ENCODE measurements at regions of chr19 and their contacts with region 1.

Region 1: DNA sequence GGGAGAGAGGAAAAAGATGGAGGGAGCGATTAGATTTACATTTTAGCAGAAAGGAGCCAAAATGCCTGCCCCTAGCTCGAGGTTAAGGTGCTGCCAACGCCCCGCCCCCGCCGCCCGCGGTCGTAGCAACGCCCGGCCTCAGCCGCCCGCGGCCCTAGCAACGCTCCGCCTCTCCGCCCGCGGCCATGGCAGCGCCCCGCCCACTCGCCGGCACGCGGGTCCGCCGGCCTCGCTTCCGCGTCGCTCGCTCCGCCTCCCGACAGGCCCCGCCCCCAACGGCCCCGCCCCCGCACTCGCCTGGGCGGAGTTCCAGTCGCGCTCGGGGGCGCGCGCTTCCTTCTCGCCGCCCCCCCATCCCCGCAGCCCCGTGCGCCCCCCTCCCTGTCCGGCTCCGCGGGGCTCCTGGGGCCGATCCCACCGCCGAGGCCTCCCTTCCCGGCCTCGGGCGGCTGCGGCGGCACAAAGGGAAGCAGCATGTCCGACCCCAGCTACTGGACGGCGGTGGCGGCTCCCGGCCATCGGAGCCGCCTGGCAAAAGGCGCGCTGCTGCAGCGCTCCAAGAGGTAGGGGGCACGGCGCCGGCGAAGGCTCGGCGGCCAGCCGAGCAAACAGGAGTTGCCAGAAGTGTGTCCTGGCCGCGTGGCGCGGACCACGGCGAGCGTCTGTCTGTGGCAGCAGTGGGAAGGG is 20.3 kb downstream of the MAST3 start:
- DNase-seq: peak; percentile 94 to 97 (median 96)
- ATAC-seq: peak; percentile 96
- H3K4me3 ChIP-seq: peak overlapping the region; percentile 44
- H3K4me1 ChIP-seq: peaks cover 13% of the 10 kb centered on the region
- CTCF ChIP-seq: no peak

Region 2: DNA sequence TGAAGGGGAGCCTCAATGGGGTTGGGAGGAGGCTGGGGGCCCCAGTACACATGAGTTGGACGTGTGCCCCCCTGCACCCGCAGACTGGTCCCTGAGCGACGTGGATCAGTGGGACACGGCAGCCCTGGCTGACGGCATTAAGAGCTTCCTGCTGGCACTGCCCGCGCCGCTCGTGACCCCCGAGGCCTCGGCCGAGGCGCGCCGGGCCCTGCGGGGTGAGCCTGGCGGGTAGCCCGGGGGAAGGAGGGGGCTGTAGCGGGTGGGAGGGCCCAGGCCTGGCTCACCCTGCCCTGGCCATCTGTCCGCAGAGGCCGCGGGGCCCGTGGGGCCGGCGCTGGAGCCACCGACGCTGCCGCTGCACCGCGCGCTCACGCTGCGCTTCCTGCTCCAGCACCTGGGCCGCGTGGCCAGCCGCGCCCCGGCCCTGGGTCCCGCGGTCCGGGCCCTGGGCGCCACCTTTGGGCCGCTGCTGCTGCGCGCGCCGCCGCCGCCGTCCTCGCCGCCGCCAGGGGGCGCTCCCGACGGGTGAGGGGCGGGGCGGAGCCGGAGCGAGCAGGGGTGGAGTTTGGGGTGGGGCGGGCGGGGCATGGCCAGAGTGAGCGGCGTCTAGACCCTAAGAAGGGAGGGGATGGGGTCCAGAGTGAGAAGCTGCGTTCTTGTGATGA is 43.3 kb after region 1 on chr19:
- intact Hi-C with region 1: loop called (anchors 5 to 10 kb)
- DNase-seq: peak; percentile 77 to 90 (median 80)
- ATAC-seq: peak; percentile 91
- H3K4me3 ChIP-seq: no peak overlapping the region
- H3K4me1 ChIP-seq: peaks cover 23% of the 10 kb centered on the region
- CTCF ChIP-seq: peak; percentile 92

Region 3: DNA sequence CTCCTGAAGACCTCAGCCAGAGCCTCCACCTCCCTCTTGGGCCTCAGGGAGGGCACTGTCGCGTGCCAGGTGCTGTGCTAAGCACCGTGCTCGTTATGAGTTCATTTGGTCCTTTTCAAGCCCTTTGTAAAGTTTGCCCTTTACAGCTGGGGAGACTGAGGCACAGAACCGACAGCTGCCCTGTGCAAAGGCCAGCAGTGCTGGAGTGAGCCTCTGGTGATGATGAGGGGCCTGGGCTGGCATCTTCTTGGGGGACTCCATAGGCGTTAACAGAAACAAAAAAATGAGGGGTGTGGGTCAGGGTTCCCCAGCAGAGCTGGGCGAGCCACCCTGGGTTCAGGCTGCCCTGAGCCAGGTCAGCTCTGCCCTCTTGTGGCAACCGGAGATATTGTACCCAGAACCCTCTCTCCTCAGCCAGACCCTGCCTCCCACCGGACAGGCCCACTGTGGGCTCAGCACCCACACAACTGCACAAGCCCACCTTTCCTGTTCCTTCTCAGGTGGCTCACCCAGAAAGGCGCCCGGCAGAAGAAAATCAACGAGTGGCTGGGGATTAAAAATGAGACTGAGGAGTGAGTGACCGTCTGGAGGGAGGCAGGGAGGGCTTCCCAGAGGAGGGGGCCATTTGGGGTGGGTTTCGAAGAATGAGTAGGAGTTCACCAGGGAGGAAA is 50.3 kb after region 1 on chr19:
- intact Hi-C with region 1: loop called (anchors 5 to 10 kb)
- DNase-seq: peak in 2 of 3 donors; percentile 63 to 66
- ATAC-seq: peak; percentile 68
- H3K4me3 ChIP-seq: no peak overlapping the region
- H3K4me1 ChIP-seq: no peaks in the 10 kb centered on the region
- CTCF ChIP-seq: peak; percentile 51

Region 4: DNA sequence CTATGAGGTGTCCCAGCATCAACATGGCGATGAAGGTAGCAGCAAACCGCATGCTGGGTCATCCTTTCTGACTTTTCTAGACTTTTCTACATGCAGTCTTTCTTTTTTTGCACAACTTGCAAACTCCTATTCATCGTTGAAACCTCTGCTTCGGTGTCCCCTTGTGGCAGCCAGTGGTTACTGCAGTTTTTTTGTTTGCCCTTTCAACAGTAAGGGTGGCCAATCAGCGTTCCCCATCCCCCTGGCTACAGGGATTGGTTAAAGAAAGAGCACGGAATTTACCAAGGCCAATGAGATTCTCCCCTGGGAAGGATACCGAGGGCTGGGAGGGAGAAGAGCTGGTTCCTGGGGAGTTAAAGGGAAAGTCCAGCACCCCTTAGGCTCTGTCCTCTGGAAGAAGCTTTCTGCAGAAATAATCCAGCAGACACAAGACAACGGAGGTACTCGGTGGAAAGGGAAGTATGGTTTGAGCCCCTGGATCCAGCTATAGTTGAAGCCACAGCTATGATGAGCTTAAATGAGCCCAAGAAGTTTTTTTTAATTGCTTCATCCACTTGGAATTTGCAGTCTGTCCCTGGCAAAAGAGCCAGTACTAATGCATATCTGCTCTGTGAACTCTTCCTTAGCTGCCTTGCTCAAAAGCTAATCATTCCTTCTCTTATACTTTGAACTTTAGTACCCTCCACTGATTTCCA is 210.7 kb after region 1 on chr19:
- intact Hi-C with region 1: loop called in 1 of 2 experiments (anchors 5 kb)
- DNase-seq: peak; percentile 67 to 95 (median 85)
- ATAC-seq: peak; percentile 97
- H3K4me3 ChIP-seq: no peak overlapping the region
- H3K4me1 ChIP-seq: peaks cover 16% of the 10 kb centered on the region
- CTCF ChIP-seq: peak; percentile 77

Measured in mucosa of descending colon (tissue), 3 donors.